ENCODE measurements at regions of chr20 and their contacts with region 1.

Region 1: DNA sequence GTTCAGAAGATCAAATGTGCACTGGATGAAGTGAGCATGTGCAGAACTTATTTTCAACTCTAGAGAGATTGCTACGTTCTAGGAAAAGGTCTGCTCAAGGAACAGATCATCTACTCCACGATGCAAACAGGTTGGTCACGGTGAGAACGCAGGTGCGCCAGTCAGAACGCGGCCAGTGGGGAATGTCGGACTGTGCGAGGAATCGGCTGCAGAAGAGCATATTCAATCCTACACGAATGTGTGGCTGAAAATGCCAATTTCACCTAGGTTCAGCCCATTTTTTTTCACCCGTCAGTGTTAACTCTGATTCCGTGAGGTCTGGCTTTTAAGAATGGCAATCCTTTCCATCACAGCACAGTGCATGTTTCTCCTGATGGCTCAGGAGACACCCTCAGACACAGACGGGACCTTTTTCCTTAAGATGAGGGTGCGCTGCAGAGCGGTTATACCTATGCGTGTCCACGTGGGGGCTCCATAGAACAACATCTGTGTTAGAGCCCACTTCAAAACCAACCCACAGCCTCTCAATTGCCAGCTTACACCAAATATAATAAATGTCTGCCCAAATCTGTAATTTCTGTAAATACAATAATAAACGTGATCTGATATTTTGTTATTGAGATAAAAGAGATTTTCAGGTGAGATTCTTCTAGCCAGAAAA is 250.4 kb downstream of the FOXA2 start:
- ATAC-seq: peak; percentile 61 to 90 (median 74)
- H3K4me3 ChIP-seq: no peak overlapping the region
- H3K27ac ChIP-seq: no peak overlapping the region
- H3K4me1 ChIP-seq: no peaks in the 10 kb centered on the region

Region 2: GRCh38 chr20:22586645-22587310 is 252.8 kb after region 1 on chr20:
- in situ Hi-C with region 1: loop called in 2 of 9 experiments (anchors 25 kb)
- ATAC-seq: peak in 6 of 8 experiments; percentile 6 to 80 (median 35)
- H3K4me3 ChIP-seq: peak overlapping the region in 1 of 5 donors; percentile 25
- H3K27ac ChIP-seq: no peak overlapping the region
- H3K4me1 ChIP-seq: peaks cover 0 to 18% of the 10 kb centered on the region in 2 donors

Region 3: DNA sequence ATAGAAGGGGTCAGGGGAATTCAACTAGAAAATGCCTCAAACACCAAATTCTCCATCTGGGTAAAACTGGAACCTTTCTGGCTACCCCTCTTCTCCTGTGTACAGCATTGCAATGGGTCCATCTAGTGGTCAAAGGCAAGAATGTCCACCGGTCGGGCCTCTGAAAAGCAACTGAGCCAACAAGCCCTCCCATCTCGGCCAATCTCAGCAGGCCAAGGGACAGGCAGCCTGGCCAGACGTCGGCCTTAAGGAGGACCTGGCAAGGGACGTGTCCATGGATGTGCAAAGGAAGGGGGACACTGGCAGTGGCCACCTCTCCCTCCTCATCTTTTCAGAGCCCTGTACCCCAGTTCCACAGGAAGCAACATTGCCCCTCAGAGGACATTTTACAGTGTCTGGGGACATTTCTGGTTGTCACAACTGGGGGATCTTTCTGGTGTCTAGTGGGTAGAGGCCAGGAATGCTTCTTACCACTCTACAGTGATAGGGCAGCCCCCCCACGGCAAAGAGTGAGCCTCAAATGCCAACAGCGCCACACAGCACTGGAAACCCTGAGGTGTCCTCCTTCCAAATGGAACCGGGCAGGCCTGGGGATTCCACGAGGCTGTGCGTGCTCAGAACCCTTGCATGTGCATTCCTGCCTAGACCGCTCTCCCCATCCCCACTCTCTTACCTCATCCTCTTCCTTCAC is 350.2 kb after region 1 on chr20:
- in situ Hi-C with region 1: loop called in 7 of 9 experiments (anchors 10 to 25 kb)
- ATAC-seq: peak; percentile 79 to 91 (median 84)
- H3K4me3 ChIP-seq: no peak overlapping the region
- H3K27ac ChIP-seq: no peak overlapping the region
- H3K4me1 ChIP-seq: peaks cover 0 to 2% of the 10 kb centered on the region in 2 donors

Region 4: GRCh38 chr20:23331450-23332350 is 997.7 kb after region 1 on chr20:
- in situ Hi-C with region 1: loop called in 4 of 9 experiments (anchors 10 to 25 kb)
- ATAC-seq: peak in 2 of 8 experiments; percentile 53 to 71
- H3K4me3 ChIP-seq: no peak overlapping the region
- H3K27ac ChIP-seq: no peak overlapping the region
- H3K4me1 ChIP-seq: peaks cover 0 to under 1% of the 10 kb centered on the region in 2 donors

Measured in motor neuron (in vitro differentiated cells).